Spleen (tissue), 13 donors: ENCODE measurements at regions of chr1 and their contacts with region 1.

Region 1: DNA sequence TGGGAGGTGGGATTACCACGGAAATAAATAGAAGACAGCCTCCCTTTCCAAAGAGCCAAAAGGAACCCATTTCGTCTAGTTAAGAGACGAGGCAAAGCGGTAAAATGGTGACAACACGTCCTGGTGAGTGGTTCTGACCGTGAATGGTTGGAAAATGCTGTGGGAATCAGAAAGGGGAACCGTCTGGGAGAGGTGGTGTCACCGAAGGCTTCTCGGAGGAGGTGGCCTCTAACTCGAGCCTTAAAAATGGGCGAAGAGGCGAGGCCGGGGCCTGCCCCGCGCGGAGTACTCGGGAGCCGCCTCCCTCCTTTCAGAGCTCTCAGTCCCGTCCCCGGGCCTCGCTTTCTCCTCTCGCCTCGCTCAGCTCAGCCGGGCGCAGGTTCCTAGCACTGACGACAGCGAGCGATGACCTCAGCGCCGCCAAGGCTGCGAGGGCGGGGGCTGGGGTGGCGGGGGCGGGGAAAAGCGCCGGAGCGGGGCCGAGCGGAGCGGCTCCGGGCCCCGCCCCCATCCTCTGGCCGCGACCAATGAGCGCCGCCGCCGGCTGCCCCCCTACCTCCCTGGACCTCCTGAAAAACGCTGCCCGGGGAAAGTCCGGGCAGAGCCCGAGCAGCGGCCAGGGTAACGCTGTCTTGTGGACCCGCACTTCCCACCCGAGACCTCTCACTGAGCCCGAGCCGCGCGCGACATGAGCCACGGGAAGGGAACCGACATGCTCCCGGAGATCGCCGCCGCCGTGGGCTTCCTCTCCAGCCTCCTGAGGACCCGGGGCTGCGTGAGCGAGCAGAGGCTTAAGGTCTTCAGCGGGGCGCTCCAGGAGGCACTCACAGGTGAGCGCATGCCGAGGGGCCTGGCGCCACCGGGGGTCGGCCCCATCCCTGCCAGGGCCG is at the start of gene BTG2:
- DNase-seq: peak; percentile 98
- H3K4me3 ChIP-seq: peak within 1 kb of the TSS; percentile 63 to 100 (median 93)
- H3K27ac ChIP-seq: peak within 1 kb of the TSS; percentile 97 to 100 (median 99)
- H3K4me1 ChIP-seq: peaks cover 40 to 82% (median 77%) of the 10 kb centered on the region in 6 donors
- H3K27me3 ChIP-seq: no peaks in the 10 kb centered on the region
- CTCF ChIP-seq: peak in 3 of 11 experiments; percentile 6 to 36 (median 7)
- POLR2A ChIP-seq: peak; percentile 99 to 100 (median 99)
- total RNA-seq, gene BTG2: 104 to 186 (median 153) TPM

Region 2: DNA sequence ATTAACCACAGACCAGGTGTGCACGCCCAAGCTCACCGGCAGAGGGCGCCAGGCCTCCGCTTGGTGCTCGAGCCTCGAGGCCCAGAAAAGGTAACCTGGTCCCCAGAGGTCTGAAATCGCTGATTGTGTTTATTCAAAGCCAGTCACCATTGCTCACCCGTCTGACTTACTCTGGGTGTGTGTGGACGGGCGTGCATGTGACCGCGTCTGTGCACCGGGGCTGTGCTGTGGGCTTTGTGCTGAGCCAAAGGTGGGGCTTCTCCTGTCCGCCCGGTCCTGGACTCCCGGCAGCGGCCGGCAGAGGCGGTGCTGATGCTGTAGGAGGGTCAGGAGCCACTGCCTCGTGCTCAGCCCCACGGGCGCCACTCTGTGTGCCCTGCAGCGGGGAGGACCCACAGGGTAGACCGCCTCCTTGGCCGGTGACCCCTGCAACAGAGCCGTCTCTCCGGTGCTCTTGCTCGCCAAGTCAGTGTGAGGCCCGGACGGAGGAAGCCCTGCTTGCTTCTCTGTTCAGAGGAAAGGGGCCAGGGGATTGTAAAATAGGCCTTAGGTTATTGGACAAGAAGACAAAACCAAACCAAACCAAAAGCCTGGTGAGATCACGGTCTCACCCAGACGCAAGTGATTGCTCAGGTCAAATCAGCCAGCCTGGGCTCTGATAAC is 31.8 kb before region 1 on chr1:
- intact Hi-C with region 1: loop called (anchors 5 kb)
- DNase-seq: peak; percentile 98
- H3K4me3 ChIP-seq: peak overlapping the region; percentile 24 to 69 (median 41)
- H3K27ac ChIP-seq: peak overlapping the region; percentile 66 to 90 (median 86)
- H3K4me1 ChIP-seq: peaks cover 38 to 100% (median 76%) of the 10 kb centered on the region in 6 donors
- H3K27me3 ChIP-seq: no peaks in the 10 kb centered on the region
- CTCF ChIP-seq: peak; percentile 91 to 99 (median 99)
- POLR2A ChIP-seq: no peak